ENCODE measurements at regions of chr6 and their contacts with region 1.

Region 1: GRCh38 chr6:150813319-150813992 is 52.0 kb upstream of the MTHFD1L start:
- DNase-seq: peak in 1 of 2 experiments; percentile 5
- ATAC-seq: peak in 1 of 2 experiments; percentile 26; a peak in 2 of 6 replicates
- H3K4me3 ChIP-seq: no peak overlapping the region
- H3K27ac ChIP-seq: peak overlapping the region; percentile 71 to 81
- H3K4me1 ChIP-seq: peaks cover 21% of the 10 kb centered on the region
- CTCF ChIP-seq: no peak
- EP300 ChIP-seq: no peak
- POLR2A ChIP-seq: no peak
- RAD21 ChIP-seq: no peak

Region 2: DNA sequence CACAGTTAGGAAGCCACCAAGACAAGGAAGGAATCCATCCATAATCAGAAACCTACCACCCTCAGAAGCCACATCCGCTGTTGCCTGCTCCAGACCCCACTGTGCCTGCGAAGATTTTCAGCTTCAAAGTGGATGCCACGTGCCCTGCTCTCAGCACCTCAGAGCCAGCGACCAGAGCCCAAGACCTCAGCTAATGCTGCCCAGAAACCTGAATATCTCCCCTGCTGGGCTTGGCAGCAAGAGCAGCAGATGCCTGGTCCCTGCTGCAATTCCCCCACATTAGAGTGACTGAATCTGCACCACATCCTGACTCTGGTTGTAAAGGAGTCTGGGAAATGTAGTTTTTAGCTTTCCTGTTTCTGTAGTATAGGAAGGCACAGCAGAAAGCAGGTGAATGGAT is 733.9 kb before region 1 on chr6:
- CTCF ChIA-PET with region 1: interaction called, 20 read pairs
- POLR2A ChIA-PET with region 1: no interaction called
- DNase-seq: no peak
- ATAC-seq: peak; percentile 27 to 55; a peak in 3 of 6 replicates
- H3K4me3 ChIP-seq: no peak overlapping the region
- H3K27ac ChIP-seq: no peak overlapping the region
- H3K4me1 ChIP-seq: peaks cover 7% of the 10 kb centered on the region; the same call in 1 of the 3 replicates
- CTCF ChIP-seq: no peak
- EP300 ChIP-seq: no peak
- POLR2A ChIP-seq: no peak
- RAD21 ChIP-seq: no peak

Region 3: DNA sequence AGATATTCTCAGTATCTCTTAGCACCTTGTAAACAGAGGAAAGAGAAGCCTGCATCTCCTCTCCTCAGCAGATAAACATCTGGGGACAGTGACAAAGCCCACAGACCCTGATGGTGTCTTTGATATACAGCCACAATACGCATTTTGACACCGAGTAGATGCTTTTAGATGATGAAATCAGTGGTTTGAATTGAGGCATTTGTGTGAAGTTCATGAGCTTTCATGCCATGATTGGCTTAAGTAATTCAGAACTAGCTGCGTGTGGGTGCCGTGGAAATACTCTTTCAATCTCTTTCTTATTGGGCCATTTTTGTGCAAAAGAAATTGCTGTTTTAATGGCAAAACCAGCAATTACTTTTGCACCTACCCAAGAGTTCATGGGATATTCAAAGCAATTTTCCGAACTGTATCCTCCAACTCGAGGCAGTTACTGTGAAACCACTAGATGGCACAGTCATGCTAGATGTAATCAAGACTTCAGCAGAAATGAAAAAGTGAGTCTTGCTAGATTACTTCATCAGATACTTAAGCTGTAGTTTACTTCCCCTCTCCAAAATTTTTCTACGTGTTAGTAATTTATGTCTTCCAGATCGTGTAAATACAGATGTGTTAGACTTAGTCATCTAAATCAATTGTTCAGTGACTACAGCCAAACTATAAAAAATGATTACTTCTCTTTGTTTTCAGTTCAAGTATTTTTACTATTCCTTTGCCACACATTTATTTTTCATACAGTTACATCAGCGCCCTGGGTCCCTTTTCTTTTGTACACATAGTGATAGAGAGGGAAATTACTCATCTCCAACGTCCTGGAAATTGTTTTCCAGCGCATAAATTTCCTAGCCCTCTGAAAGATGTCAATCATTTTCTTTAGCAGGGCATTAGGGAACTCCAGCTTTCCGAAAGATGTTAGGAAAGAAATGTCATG is 395.3 kb before region 1 on chr6:
- CTCF ChIA-PET with region 1: interaction called, 86 read pairs
- POLR2A ChIA-PET with region 1: interaction called, 16 read pairs
- DNase-seq: peak; percentile 68 to 73
- ATAC-seq: peak; percentile 88 to 93
- H3K4me3 ChIP-seq: peak overlapping the region; percentile 37
- H3K27ac ChIP-seq: peak overlapping the region; percentile 80 to 87
- H3K4me1 ChIP-seq: peaks cover 11% of the 10 kb centered on the region; the same call in 2 of the 3 replicates
- CTCF ChIP-seq: peak; percentile 75
- EP300 ChIP-seq: peak in 1 of 2 experiments; percentile 61; a peak in 2 of 5 replicates
- POLR2A ChIP-seq: no peak
- RAD21 ChIP-seq: peak; percentile 70 to 80

Region 4: DNA sequence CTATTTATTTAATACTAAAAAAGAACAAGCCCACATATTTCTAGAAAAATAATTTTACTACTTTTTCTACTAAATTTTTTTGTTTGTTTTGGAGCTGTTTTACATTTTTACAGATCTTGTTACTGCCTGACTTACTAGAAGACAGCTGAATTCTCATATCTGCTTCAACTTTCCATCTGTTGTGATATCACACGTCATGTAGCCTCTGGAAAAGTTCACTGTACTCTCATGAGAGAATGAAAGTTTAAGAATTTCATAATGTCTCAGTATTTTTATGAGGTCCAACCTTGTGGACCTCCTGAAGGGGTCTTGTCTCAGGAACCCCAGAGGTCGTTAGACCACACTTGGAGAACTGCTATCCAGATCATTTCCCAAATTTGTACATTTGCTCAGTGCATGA is 29.6 kb before region 1 on chr6:
- CTCF ChIA-PET with region 1: no interaction called
- POLR2A ChIA-PET with region 1: no interaction called
- DNase-seq: no peak
- ATAC-seq: no peak
- H3K4me3 ChIP-seq: no peak overlapping the region
- H3K27ac ChIP-seq: no peak overlapping the region
- H3K4me1 ChIP-seq: no peaks in the 10 kb centered on the region
- CTCF ChIP-seq: no peak
- EP300 ChIP-seq: no peak
- POLR2A ChIP-seq: no peak
- RAD21 ChIP-seq: no peak

Region 5: GRCh38 chr6:150830439-150831165 is 17.1 kb after region 1 on chr6:
- CTCF ChIA-PET with region 1: interaction called, 24 read pairs
- POLR2A ChIA-PET with region 1: no interaction called
- DNase-seq: no peak
- ATAC-seq: peak in 1 of 2 experiments; percentile 53; a peak in 4 of 6 replicates
- H3K4me3 ChIP-seq: no peak overlapping the region
- H3K27ac ChIP-seq: no peak overlapping the region
- H3K4me1 ChIP-seq: peaks cover 3% of the 10 kb centered on the region; the same call in 1 of the 3 replicates
- CTCF ChIP-seq: no peak
- EP300 ChIP-seq: no peak
- POLR2A ChIP-seq: no peak
- RAD21 ChIP-seq: no peak

Region 6: GRCh38 chr6:150865406-150866146 is 52.1 kb after region 1 on chr6 and contains the start of gene MTHFD1L:
- CTCF ChIA-PET with region 1: interaction called, 30 read pairs
- POLR2A ChIA-PET with region 1: interaction called, 5 read pairs
- DNase-seq: peak; percentile 84 to 85
- ATAC-seq: peak; percentile 82 to 87
- H3K4me3 ChIP-seq: peak within 1 kb of the TSS; percentile 87
- H3K27ac ChIP-seq: peak within 1 kb of the TSS; percentile 99
- H3K4me1 ChIP-seq: peaks cover 9% of the 10 kb centered on the region; the same call in 2 of the 3 replicates
- CTCF ChIP-seq: peak; percentile 58
- EP300 ChIP-seq: no peak
- POLR2A ChIP-seq: peak; percentile 38; the same call in 1 of the 2 replicates
- RAD21 ChIP-seq: no peak; a peak in 1 of 5 replicates
- polyA plus RNA-seq, gene MTHFD1L: 58.5 and 63.2 TPM in 2 replicates

Region 7: DNA sequence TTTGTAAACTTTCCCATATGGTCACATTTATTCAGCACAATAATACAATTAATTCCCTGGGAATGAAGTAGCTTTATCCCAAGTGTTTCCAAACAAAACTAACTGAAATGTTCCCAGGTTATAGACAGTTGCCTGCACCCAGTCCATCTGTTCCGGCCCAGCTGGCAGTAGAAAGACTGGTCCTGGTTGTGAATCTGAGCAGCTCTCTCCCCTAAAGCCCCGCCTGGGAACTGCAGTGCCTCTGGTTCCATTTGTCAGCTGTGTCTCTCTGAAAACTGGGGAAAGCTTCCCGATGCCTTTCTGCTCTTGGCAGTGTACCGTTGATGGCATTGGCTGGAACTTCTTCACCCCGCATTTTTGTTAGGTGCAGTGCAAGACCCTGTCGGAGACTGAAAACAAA is 60.7 kb after region 1 on chr6:
- CTCF ChIA-PET with region 1: interaction called, 11 read pairs
- POLR2A ChIA-PET with region 1: interaction called, 3 read pairs
- DNase-seq: no peak
- ATAC-seq: peak; percentile 30 to 46; a peak in 3 of 6 replicates
- H3K4me3 ChIP-seq: no peak overlapping the region
- H3K27ac ChIP-seq: no peak overlapping the region
- H3K4me1 ChIP-seq: peaks cover 6% of the 10 kb centered on the region; the same call in 1 of the 3 replicates
- CTCF ChIP-seq: no peak
- EP300 ChIP-seq: no peak
- POLR2A ChIP-seq: no peak
- RAD21 ChIP-seq: no peak

Region 8: DNA sequence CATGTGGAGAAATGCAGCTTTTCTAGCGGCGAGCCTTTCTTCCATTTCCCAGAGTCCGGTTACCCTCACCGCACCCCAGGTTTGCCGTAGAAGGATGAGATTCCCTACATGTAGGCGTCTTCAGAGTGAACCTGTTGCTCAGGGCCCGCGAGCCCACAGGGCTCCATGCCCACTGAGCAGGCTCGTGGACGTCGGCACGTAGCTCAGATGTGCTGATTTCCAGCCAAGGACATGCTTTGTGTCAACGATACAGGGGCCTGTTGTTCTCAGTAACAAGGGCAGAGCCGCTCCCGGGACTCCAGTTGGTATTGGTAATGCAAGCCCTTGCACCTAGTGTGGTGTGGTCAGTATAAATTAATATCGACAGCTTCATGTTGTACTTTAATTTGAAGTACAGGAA is 211.6 kb after region 1 on chr6:
- CTCF ChIA-PET with region 1: no interaction called
- POLR2A ChIA-PET with region 1: no interaction called
- DNase-seq: no peak
- ATAC-seq: no peak
- H3K4me3 ChIP-seq: no peak overlapping the region
- H3K27ac ChIP-seq: peak overlapping the region; percentile 30 to 75; a peak in 3 of 6 replicates
- H3K4me1 ChIP-seq: peaks cover 43% of the 10 kb centered on the region
- CTCF ChIP-seq: no peak
- EP300 ChIP-seq: no peak
- POLR2A ChIP-seq: no peak
- RAD21 ChIP-seq: no peak